H1 (cell line): ENCODE measurements at regions of chr21 and their contacts with region 1.

Region 1: GRCh38 chr21:33300701-33301631 is 23.8 kb upstream of the IFNAR1 start:
- DNase-seq: peak in 1 of 2 experiments; percentile 27
- H3K4me3 ChIP-seq: no peak overlapping the region
- H3K27ac ChIP-seq: no peak overlapping the region
- H3K4me1 ChIP-seq: no peaks in the 10 kb centered on the region
- H3K27me3 ChIP-seq: no peaks in the 10 kb centered on the region
- CTCF ChIP-seq: no peak
- EP300 ChIP-seq: no peak
- POLR2A ChIP-seq: no peak
- RAD21 ChIP-seq: no peak

Region 2: DNA sequence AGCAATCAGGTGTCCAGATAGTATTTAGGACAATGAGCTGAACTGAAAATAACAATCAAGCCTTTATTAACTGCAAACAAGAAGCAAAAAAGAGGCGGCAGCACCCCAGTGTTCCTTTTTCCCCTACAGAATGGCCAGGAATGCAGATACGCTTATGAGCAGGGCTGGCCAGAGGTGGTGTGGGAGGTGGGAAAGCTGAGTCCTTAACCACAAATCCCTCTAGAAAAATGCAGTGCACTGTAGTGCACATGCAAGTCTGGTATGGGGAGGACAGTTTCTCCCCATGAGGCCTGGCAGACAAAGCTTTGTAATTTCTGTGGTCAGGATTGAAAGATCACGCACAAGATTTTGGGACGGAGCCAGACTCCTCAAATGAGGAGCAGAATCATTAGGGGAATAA is 13.1 kb after region 1 on chr21:
- CTCF ChIA-PET with region 1: interaction called, 13 read pairs
- POLR2A ChIA-PET with region 1: no interaction called
- DNase-seq: no peak
- H3K4me3 ChIP-seq: no peak overlapping the region
- H3K27ac ChIP-seq: no peak overlapping the region
- H3K4me1 ChIP-seq: no peaks in the 10 kb centered on the region
- H3K27me3 ChIP-seq: no peaks in the 10 kb centered on the region
- CTCF ChIP-seq: no peak
- EP300 ChIP-seq: no peak
- POLR2A ChIP-seq: no peak
- RAD21 ChIP-seq: no peak

Region 3: DNA sequence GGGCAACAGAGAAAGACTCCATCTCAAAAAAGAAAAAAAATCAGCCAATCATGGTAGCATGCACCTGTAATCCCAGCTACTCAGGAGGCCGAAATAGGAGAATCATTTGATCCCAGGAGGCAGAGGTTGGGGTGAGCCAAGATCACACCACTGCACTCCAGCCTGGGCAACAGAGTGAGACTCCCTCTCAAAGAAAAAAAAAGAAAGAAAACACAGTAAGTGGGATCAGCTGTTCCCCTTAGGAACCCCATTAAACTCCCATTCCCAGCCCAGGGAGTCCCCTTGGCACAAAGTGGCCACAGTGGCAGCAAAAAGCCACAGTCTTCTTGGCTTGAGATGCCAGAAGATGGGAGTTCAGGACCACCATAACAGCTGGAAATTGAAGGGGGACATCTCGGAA is 169.7 kb after region 1 on chr21:
- CTCF ChIA-PET with region 1: no interaction called
- POLR2A ChIA-PET with region 1: no interaction called
- DNase-seq: no peak
- H3K4me3 ChIP-seq: no peak overlapping the region
- H3K27ac ChIP-seq: no peak overlapping the region
- H3K4me1 ChIP-seq: no peaks in the 10 kb centered on the region
- H3K27me3 ChIP-seq: no peaks in the 10 kb centered on the region
- CTCF ChIP-seq: no peak
- EP300 ChIP-seq: no peak
- POLR2A ChIP-seq: no peak
- RAD21 ChIP-seq: no peak